ENCODE measurements at regions of chr11 and their contacts with region 1.

Region 1: DNA sequence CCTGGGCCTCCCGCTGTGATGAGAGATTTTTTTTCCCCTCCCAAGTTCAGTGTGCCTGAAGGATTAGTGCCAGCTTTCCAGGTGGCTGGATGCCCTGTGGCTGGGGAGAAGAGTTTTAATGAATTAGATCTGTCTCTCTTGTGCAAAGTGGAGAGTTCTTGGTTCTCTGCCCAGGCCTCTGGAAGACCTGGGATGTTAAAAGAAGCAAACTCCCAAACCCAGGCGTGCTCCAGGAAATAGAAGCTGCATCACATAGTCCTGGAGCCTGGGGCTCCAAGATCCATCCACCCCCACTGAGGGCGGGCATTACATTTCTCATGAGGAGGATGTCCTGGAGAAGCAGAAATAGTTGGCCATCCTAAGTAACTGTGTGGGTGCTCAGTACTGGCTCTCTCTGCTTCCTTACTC is 30.6 kb downstream of the SDHAF2 start:
- DNase-seq: no peak
- H3K4me3 Mint-ChIP-seq: no peak overlapping the region
- H3K27ac Mint-ChIP-seq: no peak overlapping the region
- H3K4me1 Mint-ChIP-seq: no peaks in the 10 kb centered on the region
- H3K27me3 Mint-ChIP-seq: no peaks in the 10 kb centered on the region

Region 2: DNA sequence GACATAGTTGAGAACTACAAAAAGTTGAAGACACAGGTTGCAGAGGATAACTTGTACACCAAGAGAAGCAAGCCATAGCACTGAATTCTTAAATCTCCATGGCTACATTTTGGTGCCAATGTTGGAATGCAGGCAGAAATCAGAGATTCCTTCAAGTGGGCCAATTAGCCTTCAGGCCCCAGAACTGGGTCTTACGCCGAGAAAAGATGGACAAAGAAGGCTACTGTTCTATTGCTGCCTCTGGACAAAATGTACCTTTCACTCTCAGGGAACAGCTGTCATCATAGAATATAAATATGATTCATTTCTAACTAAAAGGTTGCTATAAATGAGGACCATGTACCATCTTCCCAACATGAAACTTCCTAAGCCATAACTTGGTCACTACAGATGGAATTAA is 54.4 kb before region 1 on chr11:
- CTCF ChIA-PET with region 1: no interaction called
- DNase-seq: no peak
- H3K4me3 Mint-ChIP-seq: no peak overlapping the region
- H3K27ac Mint-ChIP-seq: no peak overlapping the region
- H3K4me1 Mint-ChIP-seq: no peaks in the 10 kb centered on the region
- H3K27me3 Mint-ChIP-seq: no peaks in the 10 kb centered on the region

Region 3: GRCh38 chr11:61446211-61446651 is 14.2 kb before region 1 on chr11:
- CTCF ChIA-PET with region 1: interaction called, 17 read pairs
- DNase-seq: peak; percentile 88
- H3K4me3 Mint-ChIP-seq: no peak overlapping the region
- H3K27ac Mint-ChIP-seq: no peak overlapping the region
- H3K4me1 Mint-ChIP-seq: peaks cover 4% of the 10 kb centered on the region
- H3K27me3 Mint-ChIP-seq: no peaks in the 10 kb centered on the region

Measured in activated naive CD4-positive, alpha-beta T cell treated with anti-CD3 and anti-CD28 coated beads, Interleukin-2, amount 10 ng/mL, durations not matched to agents 7 days and 5 days (primary cell).